ENCODE measurements at regions of chr14 and their contacts with region 1.

Region 1: GRCh38 chr14:103239751-103240150 is 94.3 kb upstream of the EIF5 start:
- DNase-seq: no peak
- ATAC-seq: no peak
- H3K4me3 ChIP-seq: no peak overlapping the region
- H3K27ac ChIP-seq: no peak overlapping the region
- H3K4me1 ChIP-seq: peaks cover 0 to 12% (median 5%) of the 10 kb centered on the region in 12 donors
- H3K27me3 ChIP-seq: peaks cover 0 to 3% (median 0%) of the 10 kb centered on the region in 9 donors
- CTCF ChIP-seq: no peak
- POLR2A ChIP-seq: no peak

Region 2: GRCh38 chr14:103179094-103179493 is 60.7 kb before region 1 on chr14:
- intact Hi-C with region 1: loop called in 1 of 10 experiments (anchors 5 kb)
- DNase-seq: no peak
- ATAC-seq: no peak
- H3K4me3 ChIP-seq: no peak overlapping the region
- H3K27ac ChIP-seq: no peak overlapping the region
- H3K4me1 ChIP-seq: no peaks in the 10 kb centered on the region
- H3K27me3 ChIP-seq: no peaks in the 10 kb centered on the region
- CTCF ChIP-seq: no peak
- POLR2A ChIP-seq: no peak

Measured in heart left ventricle (tissue), 16 donors.